ENCODE measurements at regions of chr19 and their contacts with region 1.

Region 1: GRCh38 chr19:32580901-32581703 is at the start of gene PDCD5:
- DNase-seq: peak; percentile 90
- H3K4me3 Mint-ChIP-seq: peak within 1 kb of the TSS; percentile 93
- H3K27ac Mint-ChIP-seq: peak within 1 kb of the TSS; percentile 85
- H3K4me1 Mint-ChIP-seq: peaks cover 27% of the 10 kb centered on the region
- H3K27me3 Mint-ChIP-seq: peaks cover 15% of the 10 kb centered on the region
- total RNA-seq, gene PDCD5: 207 and 216 TPM in 2 replicates

Region 2: DNA sequence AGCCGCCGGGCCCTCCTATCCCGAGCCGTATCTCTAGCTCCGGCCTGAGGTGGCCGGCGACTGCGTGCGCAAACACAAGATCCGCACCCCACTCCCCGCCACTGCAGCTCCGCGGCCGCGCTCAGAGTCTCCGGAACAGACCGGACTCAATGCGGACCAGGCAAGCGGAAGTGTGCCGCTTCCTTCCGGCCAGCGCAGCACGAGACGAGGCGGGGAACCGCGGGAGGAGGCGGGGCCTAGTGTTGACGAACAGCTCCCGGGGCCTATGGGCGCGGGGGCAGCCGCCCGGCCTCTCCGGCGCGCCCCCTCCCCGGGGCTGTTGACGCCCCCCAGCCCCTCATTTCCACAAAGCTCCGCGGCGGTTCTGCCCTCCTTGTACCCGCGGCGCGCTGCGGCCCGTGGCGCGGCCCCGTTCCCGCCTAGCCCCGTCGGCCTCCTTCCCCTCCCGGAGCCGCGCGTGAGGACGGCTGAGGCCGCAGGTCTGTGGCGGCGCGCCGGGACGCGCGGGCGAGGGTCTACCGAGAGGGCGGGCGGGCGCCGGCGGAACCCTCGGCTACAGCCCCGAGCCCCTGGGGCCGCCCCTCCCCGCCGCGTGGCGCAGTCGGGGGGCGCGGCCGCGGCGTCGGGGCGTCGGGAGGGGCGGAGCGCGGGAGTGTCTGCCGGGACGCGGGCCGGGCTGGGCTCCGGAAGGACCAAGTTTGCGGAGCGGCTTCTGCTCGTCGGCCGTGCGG is 175.5 kb before region 1 on chr19 and contains the start of gene DPY19L3:
- intact Hi-C with region 1: loop called (anchors 5 kb)
- DNase-seq: peak; percentile 89
- H3K4me3 Mint-ChIP-seq: peak within 1 kb of the TSS; percentile 83
- H3K27ac Mint-ChIP-seq: peak within 1 kb of the TSS; percentile 78
- H3K4me1 Mint-ChIP-seq: peaks cover 4% of the 10 kb centered on the region
- H3K27me3 Mint-ChIP-seq: no peaks in the 10 kb centered on the region
- total RNA-seq, gene DPY19L3: 16.7 and 19.4 TPM in 2 replicates

Region 3: DNA sequence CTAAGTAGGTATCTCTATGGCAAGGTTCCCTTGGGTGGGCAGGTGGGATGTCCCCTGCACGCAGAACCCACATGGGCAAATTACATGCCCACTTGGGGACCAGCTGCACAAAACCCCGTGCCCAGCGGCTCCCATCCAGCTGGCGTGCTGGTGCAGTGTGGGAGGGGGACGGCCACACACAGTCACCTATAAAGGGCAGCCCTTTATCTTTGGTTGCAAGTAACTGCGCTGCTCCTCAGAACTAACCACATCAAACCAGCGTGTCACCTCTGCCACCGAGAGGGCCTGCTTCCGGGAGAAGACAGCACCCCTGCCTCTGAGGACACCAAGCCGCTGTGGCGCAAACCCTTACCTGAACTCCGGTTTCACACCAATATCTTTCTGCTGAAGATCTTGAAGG is 61.7 kb after region 1 on chr19:
- intact Hi-C with region 1: no loop called
- DNase-seq: peak; percentile 52
- H3K4me3 Mint-ChIP-seq: peak overlapping the region; percentile 13
- H3K27ac Mint-ChIP-seq: no peak overlapping the region
- H3K4me1 Mint-ChIP-seq: peaks cover 29% of the 10 kb centered on the region
- H3K27me3 Mint-ChIP-seq: no peaks in the 10 kb centered on the region

Region 4: DNA sequence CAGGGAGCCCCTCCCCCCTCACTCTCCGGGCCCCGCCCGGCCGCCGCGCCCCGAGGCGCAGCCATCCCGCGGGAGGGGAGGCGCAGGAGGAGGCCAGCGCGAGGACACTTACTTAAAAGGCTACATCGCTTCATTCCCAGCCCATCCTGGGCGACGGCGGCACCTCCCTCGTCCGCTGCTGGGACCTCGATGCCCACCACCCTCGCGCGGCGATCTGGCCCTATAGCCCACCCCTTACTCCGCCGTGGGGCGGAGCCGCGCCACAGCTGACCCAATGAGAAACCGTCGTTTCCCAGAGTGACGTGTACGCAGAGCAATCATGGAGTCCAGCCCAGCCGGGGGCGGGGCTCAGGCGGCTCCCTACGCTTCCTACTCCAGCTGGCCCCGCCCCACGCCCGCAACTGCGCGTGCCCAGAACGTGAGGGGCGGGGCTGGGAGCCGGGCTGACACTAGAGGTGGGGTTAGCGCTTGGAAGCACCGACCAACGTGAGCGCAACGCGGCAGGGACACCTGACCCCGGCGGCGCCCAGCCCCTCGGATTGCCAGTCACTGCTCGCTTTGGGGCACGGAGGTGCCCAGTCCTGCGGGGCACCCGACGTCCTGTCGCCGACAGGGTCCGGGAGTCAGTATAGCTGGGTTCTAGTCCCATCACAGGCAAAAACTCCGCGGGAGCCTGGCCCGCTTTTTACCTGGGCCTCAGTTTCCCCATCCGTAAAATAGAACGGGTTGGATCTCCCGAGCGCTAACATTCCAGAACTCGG is 94.0 kb after region 1 on chr19 and contains the start of gene ANKRD27:
- intact Hi-C with region 1: loop called (anchors 2 kb)
- DNase-seq: peak; percentile 96
- H3K4me3 Mint-ChIP-seq: peak within 1 kb of the TSS; percentile 95
- H3K27ac Mint-ChIP-seq: peak within 1 kb of the TSS; percentile 84
- H3K4me1 Mint-ChIP-seq: peaks cover 26% of the 10 kb centered on the region
- H3K27me3 Mint-ChIP-seq: peaks cover 15% of the 10 kb centered on the region
- total RNA-seq, gene ANKRD27: 35.6 and 38.3 TPM in 2 replicates

Measured in activated T-helper 2 cell treated with anti-CD3 and anti-CD28 coated beads, Interferon-gamma antibody, Interleukin-2, Interleukin-4, amounts not matched to agents 10 μg/mL and 5 μg/mL and 100 μg/mL, durations not matched to agents 14 hours and 24 hours and 36 hours (primary cell).